Activated naive CD4-positive, alpha-beta T cell treated with anti-CD3 and anti-CD28 coated beads, Interleukin-2, amount 10 ng/mL, durations not matched to agents 7 days and 5 days (primary cell): ENCODE measurements at regions of chr14 and their contacts with region 1.

Region 1: DNA sequence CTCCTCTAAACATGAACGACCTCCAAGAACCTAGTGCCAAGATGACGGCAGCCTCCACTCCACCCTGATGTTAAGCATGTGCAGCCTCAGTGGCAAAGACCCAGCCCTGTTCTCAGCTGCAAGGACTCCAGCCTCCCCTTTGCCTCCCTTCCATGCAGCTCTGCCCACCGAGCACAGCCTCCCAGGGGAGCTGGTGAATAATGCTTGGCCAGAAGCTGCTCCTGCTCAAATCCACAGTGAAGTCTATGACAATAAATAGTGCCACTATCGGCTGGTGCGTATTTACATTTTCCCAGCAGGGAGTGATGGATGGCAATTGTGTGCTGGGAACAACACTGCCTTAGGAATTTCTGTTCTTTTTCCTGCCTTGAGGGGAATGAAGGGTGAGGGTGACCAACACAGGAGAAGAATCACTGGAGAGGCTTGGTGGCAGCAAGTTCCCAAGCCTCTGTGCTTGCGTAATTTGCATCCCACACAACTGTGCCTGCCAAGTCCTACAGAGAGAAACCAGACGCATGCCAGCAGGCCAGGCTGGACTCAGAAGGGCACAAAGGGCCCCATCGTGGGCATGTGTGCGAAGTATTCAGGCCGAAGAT is 29.9 kb upstream of the TC2N start:
- DNase-seq: no peak
- H3K4me3 Mint-ChIP-seq: no peak overlapping the region
- H3K27ac Mint-ChIP-seq: no peak overlapping the region
- H3K4me1 Mint-ChIP-seq: peaks cover 30% of the 10 kb centered on the region
- H3K27me3 Mint-ChIP-seq: peaks cover 15% of the 10 kb centered on the region

Region 2: DNA sequence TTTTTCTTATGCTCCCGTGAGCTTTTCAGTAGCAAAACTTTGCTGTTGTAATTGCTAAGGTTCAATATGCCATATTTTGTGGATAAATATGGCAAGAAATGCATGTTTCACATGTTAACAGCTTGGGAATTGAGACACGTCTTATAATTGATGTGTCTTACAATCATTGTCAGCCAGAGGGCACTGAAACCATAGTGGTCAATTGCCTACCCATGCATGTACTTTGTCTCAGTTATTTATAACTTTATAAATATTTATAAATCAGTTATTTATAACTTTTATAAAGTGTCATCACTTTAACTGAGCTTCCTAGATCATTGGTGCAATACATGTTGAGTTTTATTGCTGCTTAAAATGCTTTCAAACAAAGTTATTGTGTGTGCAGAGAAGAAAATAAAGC is 247.3 kb before region 1 on chr14:
- CTCF ChIA-PET with region 1: interaction called, 19 read pairs
- DNase-seq: peak; percentile 24
- H3K4me3 Mint-ChIP-seq: no peak overlapping the region
- H3K27ac Mint-ChIP-seq: no peak overlapping the region
- H3K4me1 Mint-ChIP-seq: peaks cover 15% of the 10 kb centered on the region
- H3K27me3 Mint-ChIP-seq: no peaks in the 10 kb centered on the region

Region 3: DNA sequence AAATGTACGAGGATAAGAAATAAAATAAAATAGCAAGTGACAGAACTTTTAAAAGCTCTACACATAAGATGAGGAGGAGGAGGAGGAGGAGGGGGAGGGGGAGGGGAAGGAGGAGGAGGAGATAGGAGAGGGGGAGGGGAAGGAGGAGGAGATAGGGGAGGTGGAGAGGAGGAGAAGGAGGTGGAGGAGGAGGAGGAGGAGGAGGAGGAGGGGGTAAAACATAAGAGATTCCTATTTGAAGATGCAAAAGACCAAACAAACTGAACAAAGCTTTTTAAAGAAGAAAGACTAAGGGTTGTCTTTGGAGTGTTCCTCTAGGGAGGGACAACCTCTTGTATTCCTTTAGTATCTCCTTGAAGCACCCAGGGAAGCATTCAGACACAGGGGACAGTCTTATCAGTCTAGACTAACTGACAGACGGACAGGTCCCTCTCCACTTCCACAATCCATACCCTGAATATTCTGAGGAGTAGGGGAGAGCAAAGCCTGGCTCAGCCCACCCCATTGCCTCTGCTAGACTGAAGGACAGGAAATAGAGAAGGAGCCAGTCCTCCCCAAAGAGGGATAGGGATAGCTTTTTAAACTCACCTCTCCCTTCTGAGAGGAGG is 42.8 kb before region 1 on chr14:
- CTCF ChIA-PET with region 1: no interaction called
- DNase-seq: no peak
- H3K4me3 Mint-ChIP-seq: no peak overlapping the region
- H3K27ac Mint-ChIP-seq: no peak overlapping the region
- H3K4me1 Mint-ChIP-seq: peaks cover 63% of the 10 kb centered on the region
- H3K27me3 Mint-ChIP-seq: no peaks in the 10 kb centered on the region

Region 4: DNA sequence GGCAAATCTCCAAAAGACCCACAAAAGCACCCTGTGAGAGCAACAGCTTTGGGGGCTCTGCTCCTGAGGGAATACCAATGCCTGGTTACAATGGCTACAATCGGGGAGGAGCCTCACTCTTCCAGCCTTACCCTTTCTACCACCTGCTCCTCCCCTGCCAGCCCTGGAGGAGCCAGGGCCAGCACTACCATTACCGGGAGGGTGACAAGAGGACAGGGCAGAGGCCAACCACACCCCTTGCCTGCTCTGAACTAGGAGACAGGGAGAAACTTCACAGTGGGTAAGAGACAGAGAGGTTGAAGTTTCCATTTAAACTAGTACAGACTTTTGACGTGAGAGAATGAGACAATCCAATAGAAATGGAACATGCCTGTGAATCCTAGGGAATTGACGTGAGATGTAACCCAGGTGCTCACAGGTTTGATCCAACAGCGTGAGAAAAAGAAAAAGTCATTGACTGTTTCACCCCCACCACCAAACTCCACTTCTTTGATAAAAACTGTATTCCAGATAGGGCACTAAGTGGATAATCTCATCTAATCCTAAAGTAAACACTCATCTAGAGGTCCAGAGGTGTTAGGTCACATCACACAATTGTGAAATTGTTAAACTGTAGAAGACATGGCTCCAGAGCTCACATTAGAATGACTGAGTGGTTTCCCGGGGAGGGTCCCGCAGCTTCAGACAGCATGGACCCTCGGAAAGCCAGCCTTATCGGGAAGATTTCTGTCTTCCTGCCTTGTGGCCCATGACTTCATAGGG is 21.5 kb before region 1 on chr14:
- CTCF ChIA-PET with region 1: no interaction called
- DNase-seq: no peak
- H3K4me3 Mint-ChIP-seq: no peak overlapping the region
- H3K27ac Mint-ChIP-seq: peak overlapping the region; percentile 96
- H3K4me1 Mint-ChIP-seq: peaks cover 96% of the 10 kb centered on the region
- H3K27me3 Mint-ChIP-seq: no peaks in the 10 kb centered on the region

Region 5: DNA sequence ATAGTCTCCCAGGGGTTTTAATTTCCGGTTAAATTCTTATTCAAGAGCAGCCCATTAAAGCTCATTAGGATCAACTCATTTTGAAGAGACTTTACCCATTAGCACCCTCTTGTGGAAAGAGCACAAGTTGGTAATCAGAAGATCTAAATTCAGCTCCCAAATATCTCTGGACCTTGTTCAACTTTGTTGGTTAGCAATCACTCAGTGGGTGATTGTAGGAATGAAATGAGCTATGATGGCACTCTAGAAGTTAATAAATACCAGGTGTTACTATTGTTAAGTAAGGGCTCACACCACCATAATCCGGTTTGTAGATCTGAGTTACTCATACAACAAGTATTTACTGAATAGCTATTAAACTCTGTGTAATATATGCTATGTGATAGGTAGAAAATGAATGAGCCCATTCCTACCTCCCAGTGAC is 99.8 kb after region 1 on chr14:
- CTCF ChIA-PET with region 1: no interaction called
- DNase-seq: no peak
- H3K4me3 Mint-ChIP-seq: no peak overlapping the region
- H3K27ac Mint-ChIP-seq: no peak overlapping the region
- H3K4me1 Mint-ChIP-seq: peaks cover 36% of the 10 kb centered on the region
- H3K27me3 Mint-ChIP-seq: no peaks in the 10 kb centered on the region